Ascending aorta (tissue), 2 donors: ENCODE measurements at regions of chr16 and their contacts with region 1.

Region 1: GRCh38 chr16:84970447-84971127 is 40.7 kb downstream of the ZDHHC7 start:
- DNase-seq: peak in 1 of 2 donors; percentile 84
- H3K4me3 ChIP-seq: no peak overlapping the region
- H3K27ac ChIP-seq: no peak overlapping the region
- H3K4me1 ChIP-seq: peaks cover 4 to 6% of the 10 kb centered on the region in 2 donors
- H3K27me3 ChIP-seq: no peaks in the 10 kb centered on the region
- CTCF ChIP-seq: peak; percentile 86 to 91 (median 91)

Region 2: DNA sequence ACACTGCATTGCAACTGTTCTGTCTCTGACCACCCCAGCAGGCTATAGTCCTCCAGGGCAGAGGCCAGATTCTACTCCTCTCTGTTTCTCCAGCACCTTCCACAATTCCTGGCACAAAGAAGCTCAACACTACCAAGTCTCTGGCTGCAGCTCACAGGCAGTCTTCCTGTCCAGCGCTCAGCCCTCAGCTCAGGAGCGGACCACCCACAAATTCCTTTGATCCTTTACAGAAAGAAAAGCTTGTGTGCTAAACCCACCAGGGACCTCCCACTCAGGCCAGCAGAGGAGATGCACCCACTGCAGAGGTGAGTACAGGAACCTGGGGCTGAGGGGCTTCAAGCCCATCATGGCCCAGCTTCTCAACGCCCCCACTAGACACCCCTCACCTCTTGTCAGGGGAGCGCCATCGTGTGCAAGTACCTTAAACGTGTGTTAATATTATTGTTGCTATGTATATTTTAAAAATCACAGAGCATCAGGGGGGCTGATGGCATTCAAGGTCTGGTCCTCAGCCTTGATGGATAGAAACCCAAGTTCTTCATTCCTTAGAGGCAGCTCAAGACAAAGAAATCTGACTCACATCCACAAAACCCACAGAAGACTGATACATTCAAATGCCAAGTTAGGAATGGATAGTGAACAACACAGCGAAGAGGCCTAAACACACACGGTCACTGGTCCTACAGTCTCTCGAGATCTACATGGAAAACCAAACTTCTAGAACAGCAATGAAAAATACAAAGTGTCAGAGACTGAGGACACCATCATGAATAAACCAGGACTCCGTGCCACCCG is 834.1 kb before region 1 on chr16:
- intact Hi-C with region 1: no loop called
- DNase-seq: no peak
- H3K4me3 ChIP-seq: no peak overlapping the region
- H3K27ac ChIP-seq: no peak overlapping the region
- H3K4me1 ChIP-seq: no peaks in the 10 kb centered on the region
- H3K27me3 ChIP-seq: no peaks in the 10 kb centered on the region
- CTCF ChIP-seq: no peak

Region 3: GRCh38 chr16:84754353-84754856 is 216.2 kb before region 1 on chr16:
- intact Hi-C with region 1: loop called (anchors 1 kb)
- DNase-seq: peak in 1 of 2 donors; percentile 87
- H3K4me3 ChIP-seq: no peak overlapping the region
- H3K27ac ChIP-seq: no peak overlapping the region
- H3K4me1 ChIP-seq: peaks cover 0 to 4% of the 10 kb centered on the region in 2 donors
- H3K27me3 ChIP-seq: no peaks in the 10 kb centered on the region
- CTCF ChIP-seq: peak; percentile 62 to 88 (median 84)

Region 4: GRCh38 chr16:84925092-84925772 is 45.4 kb before region 1 on chr16:
- intact Hi-C with region 1: loop called (anchors 1 kb)
- DNase-seq: no peak
- H3K4me3 ChIP-seq: no peak overlapping the region
- H3K27ac ChIP-seq: no peak overlapping the region
- H3K4me1 ChIP-seq: peaks cover 11 to 14% of the 10 kb centered on the region in 2 donors
- H3K27me3 ChIP-seq: no peaks in the 10 kb centered on the region
- CTCF ChIP-seq: peak; percentile 71 to 78 (median 76)

Region 5: DNA sequence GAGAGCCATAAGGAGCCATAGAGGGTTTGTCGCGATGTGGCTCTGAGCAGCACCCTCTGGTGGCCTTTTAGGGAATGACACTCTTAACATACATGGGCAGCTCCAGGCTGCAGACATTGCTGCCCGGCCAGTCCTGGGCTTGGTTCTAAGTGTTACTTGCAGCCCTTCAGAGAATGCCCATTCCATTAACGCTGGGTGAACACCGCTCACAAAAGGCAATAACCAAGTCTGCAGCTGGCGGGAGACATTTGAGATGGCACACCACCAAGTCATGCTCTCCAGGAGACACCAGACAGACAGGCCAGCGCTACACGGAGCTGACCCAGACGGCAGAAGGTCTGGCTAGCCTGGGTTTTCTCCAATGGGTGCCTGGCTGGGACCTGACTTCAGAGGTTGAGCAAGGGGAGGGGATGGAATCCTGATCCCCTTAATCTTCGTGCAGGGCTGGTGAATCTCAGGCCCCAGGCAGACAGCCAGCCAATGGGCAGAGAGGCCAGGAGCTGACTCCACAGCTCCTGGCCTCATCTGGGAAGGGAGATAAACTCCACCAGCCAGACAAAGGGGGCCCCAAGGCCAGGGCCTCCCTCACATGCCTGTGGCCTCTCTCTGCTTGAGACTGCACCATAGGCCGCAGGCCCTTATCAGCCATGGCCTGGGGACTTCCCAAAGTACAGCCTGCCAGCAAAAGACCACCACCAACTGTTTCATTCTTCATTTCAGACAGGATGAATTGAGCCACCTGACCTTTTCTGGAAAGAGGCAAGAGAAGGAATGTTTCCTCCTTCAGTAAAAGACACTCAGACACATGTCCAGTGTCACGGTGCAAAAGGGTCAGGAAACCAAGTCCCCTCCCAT is 18.0 kb before region 1 on chr16:
- intact Hi-C with region 1: loop called (anchors 1 kb)
- DNase-seq: peak in 1 of 2 donors; percentile 88
- H3K4me3 ChIP-seq: no peak overlapping the region
- H3K27ac ChIP-seq: no peak overlapping the region
- H3K4me1 ChIP-seq: peaks cover 0 to 6% of the 10 kb centered on the region in 2 donors
- H3K27me3 ChIP-seq: no peaks in the 10 kb centered on the region
- CTCF ChIP-seq: peak; percentile 83 to 87 (median 86)

Region 6: GRCh38 chr16:85010931-85011845 is 40.6 kb after region 1 on chr16 and contains the start of gene ZDHHC7:
- intact Hi-C with region 1: loop called (anchors 2 kb)
- DNase-seq: peak; percentile 27 to 93
- H3K4me3 ChIP-seq: peak within 1 kb of the TSS; percentile 95 to 98
- H3K27ac ChIP-seq: peak within 1 kb of the TSS; percentile 90 to 96
- H3K4me1 ChIP-seq: peaks cover 2 to 39% of the 10 kb centered on the region in 2 donors
- H3K27me3 ChIP-seq: no peaks in the 10 kb centered on the region
- CTCF ChIP-seq: no peak
- total RNA-seq, gene ZDHHC7: 70.7 TPM

Region 7: DNA sequence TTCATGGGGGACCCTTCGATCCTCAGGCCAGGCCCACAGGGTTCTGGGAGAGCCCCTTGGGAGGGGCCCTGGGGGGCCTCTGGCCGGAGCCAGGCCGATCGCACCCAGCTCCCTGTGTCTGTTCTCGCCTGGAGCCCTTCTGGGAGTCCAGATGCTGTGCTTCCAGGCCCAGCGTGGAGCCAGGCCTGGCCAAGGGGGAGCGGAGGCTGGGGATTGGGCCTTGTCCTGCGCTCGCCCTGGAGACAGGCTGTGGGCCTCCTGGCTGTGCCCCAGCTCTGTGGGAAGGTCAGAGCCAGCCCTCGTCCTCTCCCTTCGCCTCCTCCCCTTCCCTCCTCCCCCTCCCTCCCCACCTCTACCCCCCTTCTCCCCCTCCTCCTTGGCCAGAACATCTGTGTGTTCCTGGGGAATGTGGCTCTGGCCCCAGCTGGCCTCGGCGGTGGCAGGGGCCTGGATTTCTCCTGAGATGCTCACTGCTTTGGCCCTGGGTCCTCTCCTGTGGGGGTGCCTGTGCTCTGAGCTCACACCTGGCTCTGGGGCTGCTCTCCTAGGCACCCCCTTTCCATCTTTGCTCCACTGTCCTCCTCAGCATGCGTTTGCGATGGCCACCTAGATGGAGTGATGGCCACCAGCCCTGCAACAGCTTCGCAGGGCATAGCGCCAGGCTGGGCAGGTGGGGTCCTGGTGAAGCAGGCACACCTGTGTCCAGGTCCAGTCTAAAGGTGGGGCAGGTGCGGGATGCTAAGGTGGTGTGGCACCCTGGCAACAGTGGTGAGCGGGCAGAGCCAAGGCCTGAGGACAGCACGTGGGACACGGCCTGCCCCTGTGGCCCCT is 232.3 kb after region 1 on chr16:
- intact Hi-C with region 1: no loop called
- DNase-seq: peak in 1 of 2 donors; percentile 90
- H3K4me3 ChIP-seq: no peak overlapping the region
- H3K27ac ChIP-seq: peak overlapping the region; percentile 75 to 87
- H3K4me1 ChIP-seq: peaks cover 36 to 52% of the 10 kb centered on the region in 2 donors
- H3K27me3 ChIP-seq: no peaks in the 10 kb centered on the region
- CTCF ChIP-seq: no peak